IMR-90 (cell line): ENCODE measurements at regions of chr17 and their contacts with region 1.

Region 1: GRCh38 chr17:56715613-56716357 is 117.9 kb downstream of the C17orf67 start:
- DNase-seq: peak; percentile 82
- ATAC-seq: peak; percentile 98
- H3K4me3 ChIP-seq: no peak overlapping the region
- H3K27ac ChIP-seq: no peak overlapping the region
- H3K4me1 ChIP-seq: peaks cover 6% of the 10 kb centered on the region
- H3K27me3 ChIP-seq: no peaks in the 10 kb centered on the region; the same call in 1 of the 2 replicates
- CTCF ChIP-seq: peak; percentile 90
- POLR2A ChIP-seq: no peak; the same call in 1 of the 2 replicates
- RAD21 ChIP-seq: peak; percentile 97

Region 2: DNA sequence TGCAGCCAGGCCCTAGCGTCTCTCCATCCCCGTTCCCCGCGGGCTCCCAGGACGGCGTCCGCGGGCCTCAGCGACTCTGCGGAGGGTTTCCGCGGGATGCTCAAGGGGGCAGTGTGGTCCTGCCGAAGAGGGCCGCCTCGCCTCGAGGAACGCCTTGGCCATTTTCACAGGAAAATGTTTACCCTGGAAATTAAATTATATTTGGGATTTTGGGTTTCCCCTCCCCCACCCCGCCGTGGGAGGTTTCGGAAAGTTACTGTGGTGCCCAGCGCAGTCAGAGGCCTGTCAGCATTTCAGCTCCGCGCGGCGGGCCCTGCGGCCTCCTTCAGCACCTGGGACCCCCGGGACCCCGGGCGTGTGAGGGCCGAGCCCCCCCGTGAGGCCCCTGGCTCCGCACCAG is 870.4 kb before region 1 on chr17:
- CTCF ChIA-PET with region 1: no interaction called
- POLR2A ChIA-PET with region 1: no interaction called
- dilution Hi-C with region 1: no loop called
- in situ Hi-C with region 1: loop called (anchors 10 kb)
- intact Hi-C with region 1: loop called (anchors 1 kb)
- DNase-seq: peak; percentile 20
- ATAC-seq: peak; percentile 96
- H3K4me3 ChIP-seq: no peak overlapping the region
- H3K27ac ChIP-seq: no peak overlapping the region
- H3K4me1 ChIP-seq: no peaks in the 10 kb centered on the region
- H3K27me3 ChIP-seq: 0 out of 2 replicates have a peak, but pooled peaks cover 2% of the 10 kb centered on the region
- CTCF ChIP-seq: peak; percentile 60
- POLR2A ChIP-seq: no peak
- RAD21 ChIP-seq: peak; percentile 70

Region 3: DNA sequence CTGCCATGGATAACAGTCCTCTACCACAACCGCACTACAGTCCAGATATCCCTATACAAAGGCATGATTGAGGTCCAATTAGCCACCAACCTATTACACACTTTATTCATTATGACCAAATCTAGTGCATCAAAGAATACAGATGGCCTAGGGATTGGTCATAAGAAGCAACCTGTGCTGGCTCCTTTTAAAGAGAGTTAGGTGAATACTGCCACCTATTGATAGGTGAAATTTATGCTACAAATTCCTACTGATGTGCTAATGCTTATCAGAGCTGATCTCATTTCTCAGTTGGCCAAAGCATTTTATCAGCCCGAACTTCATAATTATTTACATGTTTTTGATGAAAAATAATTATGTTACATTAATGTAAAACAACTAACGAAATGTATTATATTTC is 396.3 kb before region 1 on chr17:
- CTCF ChIA-PET with region 1: no interaction called
- POLR2A ChIA-PET with region 1: no interaction called
- dilution Hi-C with region 1: no loop called
- in situ Hi-C with region 1: no loop called
- intact Hi-C with region 1: loop called (anchors 5 kb)
- DNase-seq: peak; percentile 70
- ATAC-seq: peak; percentile 79
- H3K4me3 ChIP-seq: no peak overlapping the region
- H3K27ac ChIP-seq: no peak overlapping the region
- H3K4me1 ChIP-seq: peaks cover 3% of the 10 kb centered on the region
- H3K27me3 ChIP-seq: peaks cover 1% of the 10 kb centered on the region; the same call in 1 of the 2 replicates
- CTCF ChIP-seq: peak; percentile 66
- POLR2A ChIP-seq: no peak
- RAD21 ChIP-seq: peak; percentile 77

Region 4: GRCh38 chr17:56499799-56500388 is 215.9 kb before region 1 on chr17:
- CTCF ChIA-PET with region 1: interaction called, 7 read pairs
- POLR2A ChIA-PET with region 1: no interaction called
- dilution Hi-C with region 1: no loop called
- in situ Hi-C with region 1: no loop called
- intact Hi-C with region 1: loop called (anchors 1 kb)
- DNase-seq: peak; percentile 37
- ATAC-seq: no peak
- H3K4me3 ChIP-seq: no peak overlapping the region
- H3K27ac ChIP-seq: no peak overlapping the region
- H3K4me1 ChIP-seq: no peaks in the 10 kb centered on the region
- H3K27me3 ChIP-seq: no peaks in the 10 kb centered on the region; the same call in 1 of the 2 replicates
- CTCF ChIP-seq: peak; percentile 54
- POLR2A ChIP-seq: no peak
- RAD21 ChIP-seq: peak; percentile 63

Region 5: GRCh38 chr17:56577843-56578204 is 138.0 kb before region 1 on chr17:
- CTCF ChIA-PET with region 1: no interaction called
- POLR2A ChIA-PET with region 1: no interaction called
- dilution Hi-C with region 1: no loop called
- in situ Hi-C with region 1: no loop called
- intact Hi-C with region 1: no loop called
- DNase-seq: no peak
- ATAC-seq: no peak
- H3K4me3 ChIP-seq: no peak overlapping the region
- H3K27ac ChIP-seq: no peak overlapping the region
- H3K4me1 ChIP-seq: no peaks in the 10 kb centered on the region
- H3K27me3 ChIP-seq: peaks cover 16% of the 10 kb centered on the region
- CTCF ChIP-seq: no peak
- POLR2A ChIP-seq: no peak
- RAD21 ChIP-seq: no peak

Region 6: GRCh38 chr17:56727876-56728620 is 12.3 kb after region 1 on chr17:
- CTCF ChIA-PET with region 1: interaction called, 10 read pairs
- POLR2A ChIA-PET with region 1: no interaction called
- dilution Hi-C with region 1: no loop called
- in situ Hi-C with region 1: no loop called
- intact Hi-C with region 1: no loop called
- DNase-seq: no peak
- ATAC-seq: no peak
- H3K4me3 ChIP-seq: no peak overlapping the region
- H3K27ac ChIP-seq: no peak overlapping the region
- H3K4me1 ChIP-seq: peaks cover 4% of the 10 kb centered on the region
- H3K27me3 ChIP-seq: peaks cover 17% of the 10 kb centered on the region
- CTCF ChIP-seq: no peak
- POLR2A ChIP-seq: no peak
- RAD21 ChIP-seq: no peak